B cell (primary cell): ENCODE measurements at regions of chr6 and their contacts with region 1.

Region 1: GRCh38 chr6:149683256-149683859 is 34.5 kb downstream of the LATS1 start:
- DNase-seq: no peak
- ATAC-seq: no peak
- H3K4me3 ChIP-seq: no peak overlapping the region
- H3K4me3 Mint-ChIP-seq: no peak overlapping the region
- H3K27ac ChIP-seq: no peak overlapping the region
- H3K27ac Mint-ChIP-seq: no peak overlapping the region
- H3K4me1 ChIP-seq: no peaks in the 10 kb centered on the region
- H3K4me1 Mint-ChIP-seq: peaks cover 7% of the 10 kb centered on the region
- H3K27me3 ChIP-seq: no peaks in the 10 kb centered on the region
- H3K27me3 Mint-ChIP-seq: no peaks in the 10 kb centered on the region
- CTCF ChIP-seq: no peak

Region 2: GRCh38 chr6:149642829-149643580 is 40.4 kb before region 1 on chr6:
- CTCF ChIA-PET with region 1: no interaction called
- POLR2A ChIA-PET with region 1: interaction called, 3 read pairs
- intact Hi-C with region 1: loop called (anchors 1 kb)
- DNase-seq: no peak
- ATAC-seq: no peak
- H3K4me3 ChIP-seq: no peak overlapping the region
- H3K4me3 Mint-ChIP-seq: no peak overlapping the region
- H3K27ac ChIP-seq: no peak overlapping the region
- H3K27ac Mint-ChIP-seq: no peak overlapping the region
- H3K4me1 ChIP-seq: peaks cover 11% of the 10 kb centered on the region in 2 donors
- H3K4me1 Mint-ChIP-seq: peaks cover 36% of the 10 kb centered on the region
- H3K27me3 ChIP-seq: no peaks in the 10 kb centered on the region
- H3K27me3 Mint-ChIP-seq: no peaks in the 10 kb centered on the region
- CTCF ChIP-seq: no peak

Region 3: GRCh38 chr6:149734915-149735314 is 51.6 kb after region 1 on chr6:
- CTCF ChIA-PET with region 1: no interaction called
- POLR2A ChIA-PET with region 1: no interaction called
- intact Hi-C with region 1: no loop called
- DNase-seq: no peak
- ATAC-seq: no peak
- H3K4me3 ChIP-seq: no peak overlapping the region
- H3K4me3 Mint-ChIP-seq: no peak overlapping the region
- H3K27ac ChIP-seq: no peak overlapping the region
- H3K27ac Mint-ChIP-seq: no peak overlapping the region
- H3K4me1 ChIP-seq: no peaks in the 10 kb centered on the region
- H3K4me1 Mint-ChIP-seq: no peaks in the 10 kb centered on the region
- H3K27me3 ChIP-seq: no peaks in the 10 kb centered on the region
- H3K27me3 Mint-ChIP-seq: no peaks in the 10 kb centered on the region
- CTCF ChIP-seq: no peak

Region 4: DNA sequence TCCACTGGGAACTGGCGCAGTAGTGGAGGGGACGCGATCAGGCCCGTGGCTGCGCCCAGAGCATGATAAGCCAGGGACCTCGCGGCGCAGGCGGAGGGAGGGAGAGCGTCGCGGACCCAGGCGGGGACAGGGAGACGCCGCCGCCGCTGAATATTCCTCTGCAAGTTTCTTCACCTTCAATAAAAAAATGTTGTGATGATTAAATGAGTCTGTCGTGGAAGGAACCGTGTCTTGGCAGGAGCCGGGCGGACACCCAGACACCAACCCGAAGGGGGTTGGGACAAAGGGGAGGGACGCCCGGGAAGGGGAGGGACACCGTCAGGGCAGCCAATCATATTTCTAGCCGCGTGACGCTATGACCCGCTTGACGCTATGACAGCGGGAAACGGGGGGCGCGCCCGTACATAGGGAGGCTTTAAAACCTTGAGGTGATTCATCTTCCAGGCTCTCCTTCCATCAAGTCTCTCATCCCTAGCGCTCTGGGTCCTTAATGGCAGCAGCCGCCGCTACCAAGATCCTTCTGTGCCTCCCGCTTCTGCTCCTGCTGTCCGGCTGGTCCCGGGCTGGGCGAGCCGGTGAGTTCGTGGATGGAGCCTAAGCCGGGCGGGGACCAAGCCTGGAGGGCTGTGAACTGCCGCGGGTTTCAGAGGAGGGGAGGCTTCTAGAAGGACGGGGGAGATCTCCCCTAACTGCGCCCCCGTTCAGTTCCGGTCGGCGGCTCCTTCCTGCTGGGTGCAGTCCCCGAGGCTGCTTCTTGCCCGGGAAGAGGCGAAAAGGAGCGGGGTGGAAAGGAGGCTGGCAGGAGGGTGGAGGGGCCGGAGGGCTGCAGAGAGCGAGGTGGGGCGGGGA is 258.4 kb after region 1 on chr6 and contains the start of gene ULBP2:
- CTCF ChIA-PET with region 1: no interaction called
- POLR2A ChIA-PET with region 1: no interaction called
- intact Hi-C with region 1: no loop called
- DNase-seq: peak; percentile 90
- ATAC-seq: peak; percentile 72
- H3K4me3 ChIP-seq: peak within 1 kb of the TSS in 4 of 5 experiments; percentile 38 to 72 (median 52)
- H3K4me3 Mint-ChIP-seq: peak within 1 kb of the TSS; percentile 95
- H3K27ac ChIP-seq: no peak within 1 kb of the TSS
- H3K27ac Mint-ChIP-seq: peak within 1 kb of the TSS; percentile 85
- H3K4me1 ChIP-seq: peaks cover 43 to 46% of the 10 kb centered on the region in 2 donors
- H3K4me1 Mint-ChIP-seq: peaks cover 43% of the 10 kb centered on the region
- H3K27me3 ChIP-seq: peaks cover 2 to 60% (median 40%) of the 10 kb centered on the region in 4 experiments
- H3K27me3 Mint-ChIP-seq: peaks cover 56% of the 10 kb centered on the region
- CTCF ChIP-seq: no peak
- total RNA-seq, gene ULBP2: not detected in 2 replicates